Left colon (tissue), 2 donors: ENCODE measurements at regions of chr4 and their contacts with region 1.

Region 1: GRCh38 chr4:17544205-17544604 is 29.2 kb downstream of the CLRN2 start:
- DNase-seq: peak in 1 of 2 donors; percentile 17
- ATAC-seq: peak; percentile 87

Region 2: GRCh38 chr4:17636696-17637622 is 92.8 kb after region 1 on chr4:
- intact Hi-C with region 1: loop called in 1 of 2 experiments (anchors 2 kb)
- DNase-seq: peak; percentile 58 to 87
- ATAC-seq: peak; percentile 90

Region 3: GRCh38 chr4:18582841-18583240 is 1038.6 kb after region 1 on chr4:
- intact Hi-C with region 1: loop called in 1 of 2 experiments (anchors 10 kb)
- DNase-seq: no peak
- ATAC-seq: no peak